CD8-positive, alpha-beta T cell (primary cell): ENCODE measurements at regions of chr4 and their contacts with region 1.

Region 1: DNA sequence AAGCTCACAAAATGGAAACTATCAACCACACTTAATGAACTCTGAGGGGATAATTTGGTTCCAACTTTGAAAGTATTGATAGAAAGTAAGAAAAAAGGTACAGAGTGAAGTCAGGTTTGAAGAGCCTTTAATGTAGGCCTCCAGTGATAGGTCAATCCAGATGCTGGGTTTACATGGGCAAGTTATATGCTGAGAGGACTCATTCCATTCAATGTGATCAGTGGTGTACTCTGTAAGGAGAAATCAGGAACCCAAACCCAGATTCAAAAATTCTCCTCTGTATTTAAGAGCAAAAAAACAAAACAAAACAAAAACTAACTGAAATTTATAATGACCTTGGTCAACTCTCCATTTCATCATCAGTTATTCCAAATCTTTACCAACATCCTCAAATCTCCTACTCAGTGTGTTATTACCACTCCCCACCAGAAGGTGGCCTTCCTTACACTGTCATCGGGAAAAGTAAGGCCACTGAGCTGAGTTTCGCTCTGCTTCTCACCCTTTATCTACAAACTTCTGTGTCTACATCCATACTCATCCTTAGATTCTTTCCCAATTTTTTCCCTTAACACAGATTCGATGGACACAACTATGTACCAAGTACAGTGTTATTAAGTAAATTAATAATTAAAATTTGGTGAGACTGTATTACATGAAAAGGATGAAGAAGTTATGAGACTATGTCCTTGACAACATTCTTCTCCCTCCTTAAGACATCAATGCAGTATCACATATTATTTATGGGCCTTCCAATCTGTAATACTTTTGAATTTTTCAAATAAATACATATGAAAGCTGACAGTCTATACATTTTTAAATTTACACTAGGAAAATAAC is 88.3 kb downstream of the ZAR1 start:
- DNase-seq: peak in 8 of 9 experiments; percentile 9 to 78 (median 48)
- ATAC-seq: peak; percentile 98
- H3K4me3 ChIP-seq: no peak overlapping the region
- H3K4me3 Mint-ChIP-seq: no peak overlapping the region
- H3K27ac ChIP-seq: no peak overlapping the region
- H3K27ac Mint-ChIP-seq: peak overlapping the region; percentile 7
- H3K4me1 ChIP-seq: no peaks in the 10 kb centered on the region
- H3K4me1 Mint-ChIP-seq: peaks cover 3% of the 10 kb centered on the region
- H3K27me3 ChIP-seq: no peaks in the 10 kb centered on the region
- H3K27me3 Mint-ChIP-seq: no peaks in the 10 kb centered on the region
- CTCF ChIP-seq: peak; percentile 87

Region 2: GRCh38 chr4:48681856-48682255 is 103.5 kb after region 1 on chr4:
- CTCF ChIA-PET with region 1: interaction called, 4 read pairs
- POLR2A ChIA-PET with region 1: no interaction called
- intact Hi-C with region 1: loop called (anchors 1 kb)
- DNase-seq: peak in 2 of 9 experiments; percentile 36 to 58
- ATAC-seq: peak; percentile 71
- H3K4me3 ChIP-seq: no peak overlapping the region
- H3K4me3 Mint-ChIP-seq: no peak overlapping the region
- H3K27ac ChIP-seq: no peak overlapping the region
- H3K27ac Mint-ChIP-seq: peak overlapping the region; percentile 42
- H3K4me1 ChIP-seq: no peaks in the 10 kb centered on the region
- H3K4me1 Mint-ChIP-seq: peaks cover 47% of the 10 kb centered on the region
- H3K27me3 ChIP-seq: no peaks in the 10 kb centered on the region
- H3K27me3 Mint-ChIP-seq: no peaks in the 10 kb centered on the region
- CTCF ChIP-seq: peak; percentile 42

Region 3: GRCh38 chr4:48836658-48837057 is 258.3 kb after region 1 on chr4:
- CTCF ChIA-PET with region 1: no interaction called
- POLR2A ChIA-PET with region 1: interaction called, 3 read pairs
- intact Hi-C with region 1: loop called (anchors 1 to 5 kb)
- DNase-seq: no peak
- ATAC-seq: no peak
- H3K4me3 ChIP-seq: no peak overlapping the region
- H3K4me3 Mint-ChIP-seq: no peak overlapping the region
- H3K27ac ChIP-seq: no peak overlapping the region
- H3K27ac Mint-ChIP-seq: no peak overlapping the region
- H3K4me1 ChIP-seq: peaks cover 22% of the 10 kb centered on the region
- H3K4me1 Mint-ChIP-seq: peaks cover 40% of the 10 kb centered on the region
- H3K27me3 ChIP-seq: no peaks in the 10 kb centered on the region
- H3K27me3 Mint-ChIP-seq: no peaks in the 10 kb centered on the region
- CTCF ChIP-seq: no peak